Ascending aorta (tissue), 2 donors: ENCODE measurements at regions of chr21 and their contacts with region 1.

Region 1: DNA sequence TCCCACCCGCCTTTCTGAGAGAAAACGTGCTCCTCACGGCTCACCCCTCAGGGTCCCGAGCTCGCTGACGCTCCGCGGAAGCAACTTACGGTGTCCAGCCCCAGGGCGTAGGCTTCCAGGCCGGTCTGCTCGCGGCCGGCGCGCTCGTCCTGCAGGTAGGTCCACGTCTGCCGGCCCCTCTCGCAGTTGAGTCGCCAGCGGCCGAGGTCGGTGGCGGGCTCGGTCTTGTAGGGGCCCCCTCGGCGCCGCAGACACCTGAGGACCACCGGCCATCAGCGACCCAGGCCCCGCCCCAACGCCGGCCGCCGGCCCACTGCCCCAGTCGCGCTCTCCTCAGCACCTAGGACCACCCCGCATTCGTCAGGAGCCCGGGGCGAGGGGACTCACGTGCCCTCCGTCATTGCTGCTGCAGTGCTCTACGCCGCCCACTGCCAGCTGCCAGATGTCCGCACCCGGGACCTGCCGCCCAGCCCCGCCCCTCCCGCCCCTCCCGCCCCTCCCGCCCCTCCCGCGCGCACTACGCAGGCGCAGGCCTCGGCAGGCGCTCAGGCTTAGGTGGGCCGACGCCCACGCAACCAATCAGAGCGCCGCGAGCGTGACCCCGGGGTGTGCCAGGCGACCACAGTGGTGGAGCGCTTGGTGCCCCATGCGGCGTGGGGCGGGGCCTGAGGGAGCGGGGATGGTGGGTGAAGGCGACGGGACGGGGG is at the start of gene LSS:
- DNase-seq: peak; percentile 93 to 98
- H3K4me3 ChIP-seq: peak within 1 kb of the TSS; percentile 65 to 79
- H3K27ac ChIP-seq: peak within 1 kb of the TSS; percentile 81 to 88
- H3K4me1 ChIP-seq: peaks cover 15 to 16% of the 10 kb centered on the region in 2 donors
- H3K27me3 ChIP-seq: no peaks in the 10 kb centered on the region
- CTCF ChIP-seq: no peak
- total RNA-seq, gene LSS: 49.4 TPM

Region 2: GRCh38 chr21:45643021-45643980 is 585.2 kb before region 1 on chr21 and contains the start of gene PCBP3:
- intact Hi-C with region 1: loop called (anchors 2 kb)
- DNase-seq: peak; percentile 84 to 98
- H3K4me3 ChIP-seq: peak within 1 kb of the TSS; percentile 67
- H3K27ac ChIP-seq: peak within 1 kb of the TSS in 1 of 2 donors; percentile 49
- H3K4me1 ChIP-seq: peaks cover 2 to 3% of the 10 kb centered on the region in 2 donors
- H3K27me3 ChIP-seq: peaks cover 4% of the 10 kb centered on the region
- CTCF ChIP-seq: no peak
- total RNA-seq, gene PCBP3: not detected

Region 3: DNA sequence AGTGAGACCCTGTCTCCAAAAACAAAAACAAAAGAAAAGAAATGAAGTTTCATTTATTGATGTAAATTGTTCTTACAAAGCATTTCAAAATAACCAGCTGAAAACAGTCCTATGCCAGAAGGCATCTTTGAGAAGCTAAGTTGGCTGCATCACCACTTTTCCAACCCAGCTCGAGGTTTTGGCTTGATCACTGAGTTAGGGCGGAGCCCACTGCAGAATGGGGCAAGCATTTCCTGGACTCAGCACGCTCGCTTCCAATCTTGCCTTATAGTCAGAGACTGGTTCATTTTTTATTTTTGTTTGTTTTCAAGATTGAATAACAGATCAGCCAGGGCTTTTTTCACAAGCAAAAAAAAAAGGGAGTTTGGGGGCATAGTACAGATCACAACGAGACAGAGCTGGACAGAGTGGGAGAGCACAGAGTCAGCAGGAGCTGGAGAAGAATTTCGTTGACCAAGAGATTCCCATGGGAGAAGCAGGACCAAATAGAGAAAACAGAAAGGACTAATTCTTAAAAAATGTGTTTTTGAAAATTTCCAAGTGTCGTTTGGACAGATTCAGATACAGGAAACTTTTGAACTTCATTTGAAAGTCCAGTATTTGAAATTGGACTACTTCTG is 270.4 kb before region 1 on chr21:
- intact Hi-C with region 1: loop called (anchors 5 kb)
- DNase-seq: peak in 1 of 2 donors; percentile 86
- H3K4me3 ChIP-seq: peak overlapping the region in 1 of 2 donors; percentile 40
- H3K27ac ChIP-seq: peak overlapping the region; percentile 82 to 86
- H3K4me1 ChIP-seq: peaks cover 7 to 53% of the 10 kb centered on the region in 2 donors
- H3K27me3 ChIP-seq: no peaks in the 10 kb centered on the region
- CTCF ChIP-seq: no peak

Region 4: DNA sequence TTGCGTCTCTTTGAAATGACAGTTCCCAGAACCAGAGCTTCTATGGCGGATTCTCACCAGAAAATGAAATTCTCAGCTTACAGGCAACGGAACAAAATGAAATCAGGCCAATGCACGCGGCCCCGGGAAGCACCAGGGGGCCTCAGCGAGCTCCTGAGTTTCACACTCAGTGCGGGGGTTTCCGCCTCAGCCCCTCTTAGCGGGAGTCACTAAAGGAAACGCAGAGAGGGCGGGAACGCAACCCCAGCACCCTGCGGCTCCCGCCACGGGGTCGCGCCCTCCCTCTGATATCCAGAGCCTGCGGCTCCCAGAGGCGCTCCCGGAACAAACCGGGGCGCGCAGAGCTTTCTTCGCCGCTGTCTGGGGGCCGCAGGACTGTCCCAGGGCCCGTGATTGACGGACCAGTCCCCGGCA is 254.8 kb before region 1 on chr21:
- intact Hi-C with region 1: loop called (anchors 2 kb)
- DNase-seq: peak in 1 of 2 donors; percentile 93
- H3K4me3 ChIP-seq: peak overlapping the region; percentile 39 to 75
- H3K27ac ChIP-seq: peak overlapping the region; percentile 98 to 99
- H3K4me1 ChIP-seq: peaks cover 36 to 43% of the 10 kb centered on the region in 2 donors
- H3K27me3 ChIP-seq: no peaks in the 10 kb centered on the region
- CTCF ChIP-seq: peak; percentile 73 to 81 (median 79)

Region 5: GRCh38 chr21:46184625-46185555 is 43.6 kb before region 1 on chr21:
- intact Hi-C with region 1: no loop called
- DNase-seq: peak; percentile 74 to 86
- H3K4me3 ChIP-seq: peak overlapping the region; percentile 42 to 84
- H3K27ac ChIP-seq: peak overlapping the region; percentile 40 to 85
- H3K4me1 ChIP-seq: peaks cover 0 to 2% of the 10 kb centered on the region in 2 donors
- H3K27me3 ChIP-seq: no peaks in the 10 kb centered on the region
- CTCF ChIP-seq: no peak

Region 6: DNA sequence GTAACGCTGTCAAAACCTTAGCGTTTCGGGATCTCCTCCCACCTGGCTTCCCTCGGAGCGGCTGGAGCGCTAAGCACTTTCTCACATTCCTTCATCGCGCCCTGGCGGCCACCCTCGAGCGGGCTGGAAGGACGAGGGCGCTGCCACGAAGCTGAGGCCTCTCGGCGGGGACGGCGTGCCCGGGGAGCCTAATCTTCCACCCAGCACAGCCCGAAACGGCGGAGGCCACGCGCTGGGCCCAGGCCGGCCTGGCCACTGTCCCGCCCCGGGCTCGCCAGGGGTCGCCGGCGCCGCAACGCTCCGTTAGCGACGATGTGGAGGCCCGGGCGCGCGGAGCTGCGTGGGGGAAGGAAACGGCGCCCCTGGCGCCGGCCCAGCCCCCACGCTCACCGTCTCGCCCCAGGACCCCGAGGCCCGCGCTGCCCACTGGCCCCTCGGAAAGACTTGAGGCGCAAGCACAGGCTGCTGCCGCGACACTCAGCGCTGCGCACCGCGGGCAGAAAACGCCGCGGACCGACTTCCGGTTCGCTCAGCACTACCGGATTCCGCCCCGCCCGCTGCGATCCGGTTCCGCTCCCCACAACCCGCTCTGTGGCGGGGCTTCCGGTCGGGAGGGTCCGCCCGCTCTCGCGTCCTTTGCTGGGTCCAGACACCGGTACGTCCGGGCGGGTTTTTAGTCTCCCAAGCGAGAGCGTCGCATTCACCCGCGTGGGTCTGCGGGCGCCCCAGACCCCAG is 57.4 kb after region 1 on chr21 and contains the start of gene YBEY:
- intact Hi-C with region 1: loop called (anchors 1 kb)
- DNase-seq: peak; percentile 38 to 92
- H3K4me3 ChIP-seq: peak within 1 kb of the TSS; percentile 72 to 92
- H3K27ac ChIP-seq: peak within 1 kb of the TSS; percentile 92 to 96
- H3K4me1 ChIP-seq: peaks cover 19 to 30% of the 10 kb centered on the region in 2 donors
- H3K27me3 ChIP-seq: no peaks in the 10 kb centered on the region
- CTCF ChIP-seq: peak; percentile 18 to 43 (median 34)
- total RNA-seq, gene YBEY: 0.53 TPM

Region 7: DNA sequence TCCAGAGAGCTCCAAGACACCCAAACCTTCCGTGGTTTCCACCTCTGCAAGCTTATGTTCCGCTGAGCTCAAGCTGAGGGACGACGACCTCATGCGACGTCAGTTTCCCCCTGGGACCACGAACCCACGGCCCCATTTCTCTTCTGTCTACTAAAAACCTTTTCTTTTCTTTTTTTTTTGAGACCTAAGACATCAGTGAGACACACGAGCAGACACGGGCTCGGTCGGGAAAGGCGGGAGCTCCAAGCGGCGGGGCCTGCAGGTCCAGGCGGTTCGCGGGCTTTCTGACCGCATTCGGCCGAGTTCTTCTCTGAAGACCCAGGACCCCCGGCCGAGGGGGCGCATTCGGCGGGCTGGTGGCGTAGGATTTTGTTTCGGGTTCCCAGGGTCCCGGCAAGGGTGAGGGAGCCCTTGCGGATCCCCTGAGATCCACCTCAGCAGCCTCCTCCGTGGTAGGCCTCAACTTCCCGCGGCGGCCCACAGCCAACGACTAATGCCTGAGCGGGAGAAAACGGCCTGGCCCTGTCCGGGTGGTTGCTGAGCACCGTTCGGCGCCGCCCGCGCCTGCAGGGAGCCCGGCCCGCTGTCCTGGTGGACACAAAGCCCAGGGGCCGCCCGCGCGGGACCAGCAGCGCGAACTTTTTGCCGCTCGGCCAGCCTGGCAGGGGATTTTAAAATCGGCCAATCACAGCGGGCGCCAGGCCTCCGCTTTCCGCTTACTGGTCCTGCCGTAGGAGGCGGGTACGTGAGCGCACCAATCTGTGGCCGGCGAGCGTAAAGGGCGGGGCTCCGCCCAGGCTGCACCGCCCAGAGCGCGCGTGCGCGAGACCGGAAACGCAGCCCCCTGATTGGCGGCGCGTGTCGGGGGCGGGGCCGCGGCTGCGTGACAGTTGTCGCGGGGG is 95.0 kb after region 1 on chr21 and contains the start of gene C21orf58:
- intact Hi-C with region 1: loop called (anchors 1 kb)
- DNase-seq: peak; percentile 92 to 99
- H3K4me3 ChIP-seq: peak within 1 kb of the TSS; percentile 81 to 98
- H3K27ac ChIP-seq: peak within 1 kb of the TSS; percentile 97
- H3K4me1 ChIP-seq: peaks cover 15 to 20% of the 10 kb centered on the region in 2 donors
- H3K27me3 ChIP-seq: no peaks in the 10 kb centered on the region
- CTCF ChIP-seq: peak in 1 of 3 experiments; percentile 4
- total RNA-seq, gene C21orf58: 3.2 TPM

Region 8: GRCh38 chr21:46458315-46459023 is 230.0 kb after region 1 on chr21 and contains the start of gene DIP2A:
- intact Hi-C with region 1: loop called (anchors 5 kb)
- DNase-seq: peak; percentile 82 to 97
- H3K4me3 ChIP-seq: peak within 1 kb of the TSS; percentile 89 to 99
- H3K27ac ChIP-seq: peak within 1 kb of the TSS; percentile 80 to 83
- H3K4me1 ChIP-seq: peaks cover 0 to 18% of the 10 kb centered on the region in 2 donors
- H3K27me3 ChIP-seq: no peaks in the 10 kb centered on the region
- CTCF ChIP-seq: peak in 2 of 3 experiments; percentile 8 to 23
- total RNA-seq, gene DIP2A: 72.8 TPM